Activated CD4-positive, alpha-beta memory T cell treated with anti-CD3 and anti-CD28 coated beads for 36 hours (primary cell): ENCODE measurements at regions of chr3 and their contacts with region 1.

Region 1: GRCh38 chr3:51682079-51682478 is 11.0 kb downstream of the TEX264 start:
- DNase-seq: peak; percentile 86
- H3K4me3 Mint-ChIP-seq: no peak overlapping the region
- H3K27ac Mint-ChIP-seq: peak overlapping the region; percentile 79
- H3K4me1 Mint-ChIP-seq: peaks cover 83% of the 10 kb centered on the region
- H3K27me3 Mint-ChIP-seq: no peaks in the 10 kb centered on the region

Region 2: GRCh38 chr3:51538459-51539290 is 143.4 kb before region 1 on chr3 and contains the start of gene RAD54L2:
- CTCF ChIA-PET with region 1: interaction called, 14 read pairs
- POLR2A ChIA-PET with region 1: interaction called, 3 read pairs
- intact Hi-C with region 1: no loop called
- DNase-seq: peak; percentile 83
- H3K4me3 Mint-ChIP-seq: peak within 1 kb of the TSS; percentile 88
- H3K27ac Mint-ChIP-seq: peak within 1 kb of the TSS; percentile 87
- H3K4me1 Mint-ChIP-seq: peaks cover 28% of the 10 kb centered on the region
- H3K27me3 Mint-ChIP-seq: no peaks in the 10 kb centered on the region
- total RNA-seq, gene RAD54L2: 27.6 to 30.0 TPM

Region 3: DNA sequence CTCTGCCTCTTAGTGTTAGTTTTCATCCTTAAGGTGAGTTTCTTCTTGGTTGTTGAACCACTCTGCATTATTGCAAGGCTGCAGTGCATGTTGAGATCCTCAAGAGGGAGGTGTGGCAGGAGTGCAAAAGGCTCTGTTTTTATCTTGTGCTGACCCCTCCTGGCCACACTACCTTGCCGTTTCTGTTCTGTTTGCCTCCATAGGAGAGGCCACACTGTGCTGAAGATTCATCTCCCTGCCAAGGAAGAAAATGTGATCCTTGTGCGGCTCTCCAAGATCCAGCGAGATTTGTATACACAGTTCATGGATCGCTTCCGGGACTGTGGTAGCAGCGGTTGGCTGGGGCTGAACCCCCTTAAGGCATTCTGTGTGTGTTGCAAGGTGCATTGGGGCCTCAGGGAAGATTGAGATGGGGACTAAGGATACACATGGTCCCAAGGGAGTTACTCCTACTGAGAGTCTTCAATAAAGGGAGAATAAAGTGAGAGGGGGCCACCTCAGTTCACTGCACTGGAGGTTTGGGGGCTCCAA is 44.1 kb before region 1 on chr3:
- CTCF ChIA-PET with region 1: interaction called, 31 read pairs
- POLR2A ChIA-PET with region 1: no interaction called
- intact Hi-C with region 1: loop called (anchors 2 kb)
- DNase-seq: peak; percentile 45
- H3K4me3 Mint-ChIP-seq: no peak overlapping the region
- H3K27ac Mint-ChIP-seq: no peak overlapping the region
- H3K4me1 Mint-ChIP-seq: no peaks in the 10 kb centered on the region
- H3K27me3 Mint-ChIP-seq: no peaks in the 10 kb centered on the region

Region 4: GRCh38 chr3:51830836-51831385 is 148.8 kb after region 1 on chr3:
- CTCF ChIA-PET with region 1: no interaction called
- POLR2A ChIA-PET with region 1: no interaction called
- intact Hi-C with region 1: no loop called
- DNase-seq: no peak
- H3K4me3 Mint-ChIP-seq: no peak overlapping the region
- H3K27ac Mint-ChIP-seq: no peak overlapping the region
- H3K4me1 Mint-ChIP-seq: no peaks in the 10 kb centered on the region
- H3K27me3 Mint-ChIP-seq: peaks cover 18% of the 10 kb centered on the region

Region 5: GRCh38 chr3:52455283-52456168 is 773.4 kb after region 1 on chr3 and contains the start of gene NISCH:
- CTCF ChIA-PET with region 1: no interaction called
- POLR2A ChIA-PET with region 1: no interaction called
- intact Hi-C with region 1: no loop called
- DNase-seq: peak; percentile 97
- H3K4me3 Mint-ChIP-seq: peak within 1 kb of the TSS; percentile 89
- H3K27ac Mint-ChIP-seq: peak within 1 kb of the TSS; percentile 87
- H3K4me1 Mint-ChIP-seq: peaks cover 35% of the 10 kb centered on the region
- H3K27me3 Mint-ChIP-seq: no peaks in the 10 kb centered on the region
- total RNA-seq, gene NISCH: 50.8 to 60.2 TPM

Region 6: DNA sequence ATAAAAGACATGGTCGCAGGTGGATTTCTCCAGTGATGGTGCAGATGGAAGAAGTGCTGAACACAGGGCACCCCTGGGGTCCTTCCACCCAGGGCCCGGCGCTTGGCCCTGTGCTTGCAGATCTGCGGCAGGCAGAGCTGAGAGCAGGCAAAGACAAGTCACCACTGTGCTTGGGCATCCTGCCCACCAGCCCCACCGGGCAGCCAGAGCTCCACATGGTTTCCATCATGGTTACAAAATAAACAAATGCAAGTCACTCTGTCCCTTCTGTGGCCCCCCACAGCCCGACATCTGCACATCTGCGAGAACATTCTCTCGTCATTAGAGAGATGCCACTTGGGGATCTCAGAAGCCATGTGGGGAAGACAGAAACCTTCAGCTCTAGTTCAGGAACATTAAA is 1401.4 kb after region 1 on chr3:
- CTCF ChIA-PET with region 1: no interaction called
- POLR2A ChIA-PET with region 1: no interaction called
- intact Hi-C with region 1: no loop called
- DNase-seq: no peak
- H3K4me3 Mint-ChIP-seq: no peak overlapping the region
- H3K27ac Mint-ChIP-seq: no peak overlapping the region
- H3K4me1 Mint-ChIP-seq: peaks cover 2% of the 10 kb centered on the region
- H3K27me3 Mint-ChIP-seq: no peaks in the 10 kb centered on the region